IMR-90 (cell line): ENCODE measurements at regions of chr1 and their contacts with region 1.

Region 1: DNA sequence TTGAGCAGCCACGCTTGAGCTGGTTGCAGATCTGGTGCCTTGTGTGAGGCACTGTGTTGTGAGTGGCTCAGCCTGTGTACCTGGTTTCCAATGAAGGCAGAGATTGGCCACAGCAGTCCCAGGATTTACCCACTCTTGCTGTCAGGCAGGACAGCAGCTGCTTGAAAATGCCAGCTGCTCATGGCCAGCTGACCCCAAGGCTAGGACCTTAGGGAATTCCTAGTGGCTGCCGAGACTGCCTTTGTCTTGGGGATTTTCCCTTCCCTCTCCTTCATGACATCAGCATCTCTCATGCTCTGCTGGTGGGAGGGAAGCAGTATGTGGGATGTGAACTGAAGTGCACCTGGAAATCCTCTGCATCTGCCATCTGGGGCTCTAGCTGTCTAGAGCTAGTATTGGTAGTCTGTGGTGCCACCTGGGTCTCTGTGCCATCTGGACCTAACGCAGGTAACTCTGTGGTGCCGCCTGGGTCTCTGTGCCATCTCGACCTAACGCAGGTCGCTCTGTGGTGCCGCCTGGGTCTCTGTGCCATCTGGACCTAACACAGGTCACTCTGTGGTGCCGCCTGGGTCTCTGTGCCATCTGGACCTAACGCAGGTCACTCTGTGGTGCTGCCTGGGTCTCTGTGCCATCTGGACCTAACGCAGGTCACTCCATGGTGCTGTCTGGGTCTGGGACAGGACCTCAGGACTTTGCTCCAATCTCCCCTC is 3.8 kb upstream of the LRRC47 start:
- DNase-seq: no peak
- ATAC-seq: no peak
- H3K4me3 ChIP-seq: no peak overlapping the region
- H3K27ac ChIP-seq: no peak overlapping the region
- H3K4me1 ChIP-seq: peaks cover 2% of the 10 kb centered on the region; the same call in 1 of the 2 replicates
- H3K27me3 ChIP-seq: no peaks in the 10 kb centered on the region
- CTCF ChIP-seq: no peak
- POLR2A ChIP-seq: no peak
- RAD21 ChIP-seq: no peak

Region 2: GRCh38 chr1:3657096-3657475 is 143.0 kb before region 1 on chr1:
- CTCF ChIA-PET with region 1: no interaction called
- POLR2A ChIA-PET with region 1: no interaction called
- dilution Hi-C with region 1: no loop called
- in situ Hi-C with region 1: no loop called
- intact Hi-C with region 1: no loop called
- DNase-seq: no peak
- ATAC-seq: no peak
- H3K4me3 ChIP-seq: no peak overlapping the region
- H3K27ac ChIP-seq: no peak overlapping the region
- H3K4me1 ChIP-seq: no peaks in the 10 kb centered on the region
- H3K27me3 ChIP-seq: peaks cover 61% of the 10 kb centered on the region
- CTCF ChIP-seq: no peak
- POLR2A ChIP-seq: no peak
- RAD21 ChIP-seq: no peak

Region 3: GRCh38 chr1:3740042-3740441 is 60.1 kb before region 1 on chr1:
- CTCF ChIA-PET with region 1: no interaction called
- POLR2A ChIA-PET with region 1: no interaction called
- dilution Hi-C with region 1: no loop called
- in situ Hi-C with region 1: no loop called
- intact Hi-C with region 1: no loop called
- DNase-seq: no peak
- ATAC-seq: no peak
- H3K4me3 ChIP-seq: no peak overlapping the region
- H3K27ac ChIP-seq: no peak overlapping the region
- H3K4me1 ChIP-seq: no peaks in the 10 kb centered on the region; the same call in 1 of the 2 replicates
- H3K27me3 ChIP-seq: no peaks in the 10 kb centered on the region
- CTCF ChIP-seq: no peak
- POLR2A ChIP-seq: no peak
- RAD21 ChIP-seq: no peak

Region 4: DNA sequence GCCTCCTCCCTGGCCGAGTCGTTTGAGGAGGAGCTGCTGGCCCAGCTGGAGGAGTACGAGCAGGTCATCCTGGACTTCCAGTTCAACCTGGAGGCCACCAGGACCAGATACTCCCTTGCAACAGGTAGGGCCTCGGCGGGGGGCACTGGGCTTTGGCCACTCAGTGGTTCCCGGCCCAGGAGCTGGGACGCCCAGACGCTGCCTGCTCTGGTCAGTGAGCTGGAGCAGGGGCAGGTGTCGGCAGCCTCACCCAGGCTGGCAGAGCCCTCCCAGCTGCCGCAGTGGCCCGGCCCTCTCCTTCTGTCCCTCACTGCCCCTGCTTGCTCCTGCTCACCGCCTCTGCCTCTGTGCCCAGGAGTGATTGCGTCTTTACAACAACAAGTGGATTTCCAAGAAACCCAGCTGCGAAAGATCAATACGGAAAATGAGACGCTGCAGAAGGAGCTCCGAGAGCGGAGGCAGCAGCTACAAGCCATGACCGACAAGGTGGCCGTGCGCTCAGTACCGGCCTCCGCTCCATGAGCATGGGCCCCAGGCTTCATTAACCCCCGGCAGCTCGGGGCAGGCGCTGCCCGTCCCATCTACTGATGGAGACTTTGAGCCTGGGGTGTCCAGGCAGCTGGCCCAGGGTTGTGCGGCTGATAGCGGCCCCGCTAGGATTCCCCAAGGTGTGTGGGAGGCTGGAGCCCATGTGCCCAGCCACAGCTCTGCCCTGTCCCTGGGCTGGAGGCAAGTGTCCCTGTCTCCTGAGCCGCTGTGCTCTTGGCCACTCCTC is 36.6 kb before region 1 on chr1:
- CTCF ChIA-PET with region 1: no interaction called
- POLR2A ChIA-PET with region 1: no interaction called
- dilution Hi-C with region 1: no loop called
- in situ Hi-C with region 1: no loop called
- intact Hi-C with region 1: loop called (anchors 1 kb)
- DNase-seq: no peak
- ATAC-seq: no peak
- H3K4me3 ChIP-seq: no peak overlapping the region
- H3K27ac ChIP-seq: no peak overlapping the region
- H3K4me1 ChIP-seq: no peaks in the 10 kb centered on the region
- H3K27me3 ChIP-seq: peaks cover 23% of the 10 kb centered on the region
- CTCF ChIP-seq: no peak
- POLR2A ChIP-seq: no peak
- RAD21 ChIP-seq: no peak

Region 5: GRCh38 chr1:4362314-4363044 is 562.3 kb after region 1 on chr1:
- CTCF ChIA-PET with region 1: no interaction called
- POLR2A ChIA-PET with region 1: no interaction called
- dilution Hi-C with region 1: no loop called
- in situ Hi-C with region 1: no loop called
- intact Hi-C with region 1: no loop called
- DNase-seq: no peak
- ATAC-seq: no peak
- H3K4me3 ChIP-seq: no peak overlapping the region
- H3K27ac ChIP-seq: no peak overlapping the region
- H3K4me1 ChIP-seq: no peaks in the 10 kb centered on the region
- H3K27me3 ChIP-seq: no peaks in the 10 kb centered on the region
- CTCF ChIP-seq: no peak
- POLR2A ChIP-seq: no peak
- RAD21 ChIP-seq: no peak